Activated B cell treated with CpG ODN at 0.5 μM for 24 hours (primary cell): ENCODE measurements at regions of chr9 and their contacts with region 1.

Region 1: DNA sequence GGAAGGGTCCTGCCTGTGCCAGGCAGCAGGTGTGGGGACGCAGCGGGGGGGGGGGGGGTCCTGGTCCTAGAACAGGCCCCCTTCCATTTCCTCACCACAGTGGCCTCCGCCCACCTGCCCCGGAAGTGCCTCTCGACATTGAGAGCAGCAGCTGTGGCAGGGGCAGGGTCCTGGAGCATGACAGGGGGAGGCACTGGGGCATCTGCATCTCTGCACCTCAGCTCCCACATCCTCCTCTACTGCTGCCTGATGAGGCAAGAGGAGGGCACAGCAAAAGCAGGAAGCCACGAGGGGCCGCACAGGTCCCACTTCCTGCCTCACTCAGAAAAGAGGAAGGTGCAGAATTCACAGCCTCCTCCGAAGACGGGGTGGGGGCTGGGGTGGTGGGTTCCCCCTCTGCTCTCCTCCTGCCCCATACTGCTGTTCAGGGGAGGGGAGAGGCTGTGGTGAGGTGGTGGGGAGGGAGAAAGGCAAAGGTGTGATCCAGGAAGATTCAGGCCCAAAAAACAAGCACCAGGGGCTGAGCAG is 14.8 kb downstream of the AKNA start:
- DNase-seq: peak; percentile 78
- ATAC-seq: peak; percentile 94
- H3K4me3 Mint-ChIP-seq: peak overlapping the region; percentile 72
- H3K27ac Mint-ChIP-seq: peak overlapping the region; percentile 98
- H3K4me1 Mint-ChIP-seq: peaks cover 92% of the 10 kb centered on the region
- H3K27me3 Mint-ChIP-seq: no peaks in the 10 kb centered on the region
- CTCF ChIP-seq: no peak

Region 2: DNA sequence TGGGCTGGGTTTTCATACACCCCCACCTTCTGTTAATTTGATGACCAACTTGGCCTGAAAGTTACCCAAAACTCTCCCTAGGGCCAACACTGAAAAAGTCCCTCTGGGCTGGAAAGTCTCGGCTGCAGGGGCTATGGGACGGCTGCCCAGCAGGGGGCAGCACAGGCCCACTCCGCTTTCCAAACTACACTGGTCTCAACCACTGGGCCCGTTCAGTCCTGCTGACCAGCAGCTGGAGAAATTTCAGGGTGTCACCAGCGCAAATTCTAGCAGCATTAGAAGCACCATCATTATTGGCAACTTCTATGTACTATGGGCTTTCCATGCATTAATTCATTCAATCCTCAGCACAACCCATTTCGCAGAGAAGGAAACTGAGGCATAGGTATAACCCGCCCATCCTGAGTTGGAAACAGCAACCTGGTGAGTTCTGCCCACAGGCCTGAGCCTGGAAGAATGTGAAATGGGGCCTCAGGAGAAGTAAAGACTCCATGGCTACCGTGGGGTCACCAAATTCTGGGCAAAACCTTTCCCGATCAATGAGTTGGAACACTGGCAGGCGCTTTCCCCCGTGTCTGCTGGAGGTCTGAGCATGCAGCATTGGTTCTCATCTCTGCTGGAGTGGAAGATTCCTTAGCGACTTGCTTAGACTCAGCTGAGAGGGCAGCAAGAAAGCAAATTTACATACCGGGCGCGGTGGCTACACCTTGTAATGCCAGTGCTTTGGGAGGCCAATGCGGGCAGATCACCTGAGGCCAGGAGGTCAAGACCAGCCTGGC is 33.7 kb before region 1 on chr9:
- CTCF ChIA-PET with region 1: interaction called, 3 read pairs
- POLR2A ChIA-PET with region 1: interaction called, 6 read pairs
- intact Hi-C with region 1: loop called (anchors 2 kb)
- DNase-seq: peak; percentile 68
- ATAC-seq: peak; percentile 79
- H3K4me3 Mint-ChIP-seq: peak overlapping the region; percentile 6
- H3K27ac Mint-ChIP-seq: peak overlapping the region; percentile 74
- H3K4me1 Mint-ChIP-seq: peaks cover 32% of the 10 kb centered on the region
- H3K27me3 Mint-ChIP-seq: no peaks in the 10 kb centered on the region
- CTCF ChIP-seq: peak; percentile 87

Region 3: DNA sequence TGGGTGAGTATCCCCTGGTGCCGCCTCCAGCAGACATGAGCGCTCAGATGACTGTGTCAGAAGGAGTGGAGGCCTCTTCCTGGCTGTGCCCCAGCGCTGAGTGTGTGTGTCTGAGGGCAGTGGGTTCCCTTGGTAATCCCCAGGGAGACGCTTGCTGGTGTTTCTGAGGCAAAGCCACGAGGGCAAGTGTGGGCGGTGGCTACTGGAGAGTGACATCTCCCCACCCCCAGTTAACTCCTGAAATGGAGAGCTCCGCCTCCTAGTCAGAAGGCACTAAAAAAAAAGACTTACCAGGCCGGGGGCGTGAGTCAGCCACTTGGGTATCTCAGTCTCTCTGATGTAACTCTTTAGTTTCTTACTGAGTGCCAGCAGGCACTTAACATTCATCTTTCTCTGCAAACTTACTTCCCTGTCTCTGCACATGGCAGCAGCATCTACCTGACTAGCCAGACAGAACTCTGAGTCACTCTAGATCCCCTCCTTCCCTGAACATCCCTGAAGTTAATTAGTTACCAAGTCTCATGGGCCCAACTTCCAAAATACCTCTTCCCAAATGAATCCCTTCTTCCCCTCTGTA is 24.0 kb before region 1 on chr9:
- CTCF ChIA-PET with region 1: no interaction called
- POLR2A ChIA-PET with region 1: interaction called, 25 read pairs
- intact Hi-C with region 1: loop called (anchors 1 kb)
- DNase-seq: peak; percentile 77
- ATAC-seq: peak; percentile 94
- H3K4me3 Mint-ChIP-seq: peak overlapping the region; percentile 58
- H3K27ac Mint-ChIP-seq: peak overlapping the region; percentile 94
- H3K4me1 Mint-ChIP-seq: peaks cover 44% of the 10 kb centered on the region
- H3K27me3 Mint-ChIP-seq: no peaks in the 10 kb centered on the region
- CTCF ChIP-seq: no peak

Region 4: DNA sequence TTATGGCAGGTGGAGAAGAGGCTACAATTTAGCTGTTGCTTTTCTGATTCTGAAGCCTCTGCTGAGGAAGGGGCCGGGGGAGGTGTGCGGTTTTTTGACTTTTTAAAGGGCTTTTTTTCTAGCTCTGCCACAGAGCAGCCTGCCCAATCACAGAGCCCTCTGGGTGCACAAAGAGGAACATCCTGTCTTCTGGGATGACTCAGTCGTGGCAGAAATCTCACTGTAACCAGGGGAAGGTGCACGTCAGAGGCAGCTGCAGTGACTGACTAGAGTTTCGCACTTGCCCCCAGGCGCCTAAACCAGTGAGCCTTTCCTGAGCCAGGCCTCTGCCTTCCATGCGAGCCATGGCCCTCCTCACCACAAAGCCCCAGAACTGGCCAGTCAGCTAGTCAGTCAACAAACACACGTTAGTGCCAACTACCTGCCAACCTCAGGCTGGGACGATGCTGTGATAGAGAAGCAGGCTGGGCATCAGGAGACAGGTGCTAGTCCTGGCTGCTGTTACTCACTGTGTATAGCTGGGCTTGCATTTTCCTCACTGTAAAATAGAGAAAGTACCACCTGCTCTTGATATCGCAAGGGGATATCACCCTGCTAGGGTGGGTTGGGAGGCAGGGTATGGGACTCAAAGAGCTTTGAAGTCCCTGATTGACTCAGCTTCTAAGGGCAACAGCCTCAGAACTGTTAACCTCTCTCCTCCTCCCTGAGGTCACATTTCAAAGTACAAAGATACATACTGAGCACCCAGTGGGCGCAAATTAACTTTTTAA is 12.6 kb after region 1 on chr9:
- CTCF ChIA-PET with region 1: interaction called, 46 read pairs
- POLR2A ChIA-PET with region 1: interaction called, 913 read pairs
- intact Hi-C with region 1: loop called (anchors 1 kb)
- DNase-seq: peak; percentile 71
- ATAC-seq: peak; percentile 77
- H3K4me3 Mint-ChIP-seq: peak overlapping the region; percentile 97
- H3K27ac Mint-ChIP-seq: peak overlapping the region; percentile 93
- H3K4me1 Mint-ChIP-seq: peaks cover 85% of the 10 kb centered on the region
- H3K27me3 Mint-ChIP-seq: no peaks in the 10 kb centered on the region
- CTCF ChIP-seq: no peak

Region 5: GRCh38 chr9:114392749-114393112 is 19.7 kb after region 1 on chr9:
- CTCF ChIA-PET with region 1: interaction called, 46 read pairs
- POLR2A ChIA-PET with region 1: interaction called, 913 read pairs
- intact Hi-C with region 1: no loop called
- DNase-seq: no peak
- ATAC-seq: no peak
- H3K4me3 Mint-ChIP-seq: no peak overlapping the region
- H3K27ac Mint-ChIP-seq: peak overlapping the region; percentile 93
- H3K4me1 Mint-ChIP-seq: peaks cover 97% of the 10 kb centered on the region
- H3K27me3 Mint-ChIP-seq: no peaks in the 10 kb centered on the region
- CTCF ChIP-seq: no peak

Region 6: DNA sequence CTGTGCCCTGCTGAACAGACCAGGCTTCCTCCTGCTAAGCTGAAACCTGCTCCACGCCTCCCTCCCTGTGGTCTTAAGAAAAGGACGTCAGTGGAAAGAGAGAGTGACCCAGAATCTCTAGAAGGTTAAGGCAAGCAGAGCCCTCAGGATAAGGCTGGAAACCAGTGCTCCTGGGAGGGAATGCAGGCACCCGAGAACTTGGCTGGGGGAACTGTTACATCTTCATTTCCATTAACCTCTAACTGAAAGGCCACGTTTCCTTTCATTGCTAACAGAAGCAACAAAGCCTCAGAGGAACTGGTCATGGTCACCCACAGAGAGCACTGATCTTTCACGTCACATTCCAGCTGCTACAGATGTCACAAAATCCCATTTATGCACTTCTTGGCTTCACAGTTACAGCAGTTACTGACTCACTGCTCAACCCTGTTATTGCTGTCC is 40.9 kb after region 1 on chr9:
- CTCF ChIA-PET with region 1: no interaction called
- POLR2A ChIA-PET with region 1: no interaction called
- intact Hi-C with region 1: no loop called
- DNase-seq: no peak
- ATAC-seq: no peak
- H3K4me3 Mint-ChIP-seq: no peak overlapping the region
- H3K27ac Mint-ChIP-seq: no peak overlapping the region
- H3K4me1 Mint-ChIP-seq: no peaks in the 10 kb centered on the region
- H3K27me3 Mint-ChIP-seq: no peaks in the 10 kb centered on the region
- CTCF ChIP-seq: no peak

Region 7: DNA sequence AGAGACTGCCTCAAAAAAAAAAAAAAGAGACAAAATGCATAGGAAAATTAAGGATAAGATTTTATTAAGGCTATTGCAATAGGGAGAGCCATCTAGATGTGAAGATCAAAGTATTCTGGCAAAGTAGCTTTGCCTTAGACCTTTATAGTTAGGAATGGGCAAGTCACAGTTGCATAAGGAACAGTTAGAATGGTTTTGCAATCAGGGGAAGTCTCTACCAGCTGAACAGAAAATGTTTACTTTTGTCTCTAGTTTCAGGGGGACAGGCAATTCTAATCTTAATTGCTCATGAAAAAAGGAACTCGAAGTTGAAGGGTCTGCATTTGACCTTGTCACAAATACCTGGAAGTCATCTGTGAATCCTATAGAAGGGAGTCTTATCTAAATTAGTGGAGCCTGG is 201.5 kb after region 1 on chr9:
- CTCF ChIA-PET with region 1: no interaction called
- POLR2A ChIA-PET with region 1: no interaction called
- intact Hi-C with region 1: no loop called
- DNase-seq: no peak
- ATAC-seq: no peak
- H3K4me3 Mint-ChIP-seq: no peak overlapping the region
- H3K27ac Mint-ChIP-seq: no peak overlapping the region
- H3K4me1 Mint-ChIP-seq: peaks cover 27% of the 10 kb centered on the region
- H3K27me3 Mint-ChIP-seq: no peaks in the 10 kb centered on the region
- CTCF ChIP-seq: no peak

Region 8: GRCh38 chr9:114616653-114617520 is 243.9 kb after region 1 on chr9:
- CTCF ChIA-PET with region 1: no interaction called
- POLR2A ChIA-PET with region 1: interaction called, 12 read pairs
- intact Hi-C with region 1: no loop called
- DNase-seq: peak; percentile 73
- ATAC-seq: peak; percentile 76
- H3K4me3 Mint-ChIP-seq: peak overlapping the region; percentile 74
- H3K27ac Mint-ChIP-seq: peak overlapping the region; percentile 98
- H3K4me1 Mint-ChIP-seq: peaks cover 83% of the 10 kb centered on the region
- H3K27me3 Mint-ChIP-seq: no peaks in the 10 kb centered on the region
- CTCF ChIP-seq: no peak

Region 9: GRCh38 chr9:114691046-114691955 is 318.3 kb after region 1 on chr9:
- CTCF ChIA-PET with region 1: no interaction called
- POLR2A ChIA-PET with region 1: interaction called, 12 read pairs
- intact Hi-C with region 1: no loop called
- DNase-seq: no peak
- ATAC-seq: peak; percentile 84
- H3K4me3 Mint-ChIP-seq: no peak overlapping the region
- H3K27ac Mint-ChIP-seq: peak overlapping the region; percentile 14
- H3K4me1 Mint-ChIP-seq: peaks cover 9% of the 10 kb centered on the region
- H3K27me3 Mint-ChIP-seq: peaks cover 17% of the 10 kb centered on the region
- CTCF ChIP-seq: no peak